Activated CD4-positive, alpha-beta T cell treated with anti-CD3 and anti-CD28 coated beads for 36 hours (primary cell): ENCODE measurements at regions of chr17 and their contacts with region 1.

Region 1: GRCh38 chr17:27879987-27880608 is 13.1 kb downstream of the LYRM9 start:
- DNase-seq: peak; percentile 85
- ATAC-seq: peak; percentile 91
- H3K4me3 Mint-ChIP-seq: no peak overlapping the region
- H3K27ac Mint-ChIP-seq: no peak overlapping the region
- H3K4me1 Mint-ChIP-seq: peaks cover 17% of the 10 kb centered on the region
- H3K27me3 Mint-ChIP-seq: no peaks in the 10 kb centered on the region

Region 2: DNA sequence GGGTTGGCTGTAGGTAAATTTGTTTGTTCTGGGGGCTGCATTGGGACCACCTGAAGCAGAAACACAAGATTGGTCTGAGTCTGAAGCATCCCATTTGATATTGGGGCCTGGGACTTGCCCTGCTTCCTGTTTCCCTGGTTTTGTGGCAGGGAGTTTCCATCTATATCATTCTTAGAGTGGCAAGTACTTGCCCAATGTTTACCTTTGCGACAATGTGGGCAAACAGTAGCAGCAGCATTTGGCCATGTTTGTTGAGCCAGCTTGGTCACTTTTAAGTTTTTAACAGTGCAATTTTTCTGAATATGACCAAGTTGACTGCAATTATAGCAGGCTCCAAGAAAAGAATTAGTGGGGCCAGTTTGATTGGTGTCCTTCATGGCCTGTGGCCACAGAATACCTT is 187.3 kb before region 1 on chr17:
- CTCF ChIA-PET with region 1: no interaction called
- POLR2A ChIA-PET with region 1: no interaction called
- intact Hi-C with region 1: no loop called
- DNase-seq: no peak
- ATAC-seq: no peak
- H3K4me3 Mint-ChIP-seq: no peak overlapping the region
- H3K27ac Mint-ChIP-seq: no peak overlapping the region
- H3K4me1 Mint-ChIP-seq: no peaks in the 10 kb centered on the region
- H3K27me3 Mint-ChIP-seq: peaks cover 6% of the 10 kb centered on the region

Region 3: DNA sequence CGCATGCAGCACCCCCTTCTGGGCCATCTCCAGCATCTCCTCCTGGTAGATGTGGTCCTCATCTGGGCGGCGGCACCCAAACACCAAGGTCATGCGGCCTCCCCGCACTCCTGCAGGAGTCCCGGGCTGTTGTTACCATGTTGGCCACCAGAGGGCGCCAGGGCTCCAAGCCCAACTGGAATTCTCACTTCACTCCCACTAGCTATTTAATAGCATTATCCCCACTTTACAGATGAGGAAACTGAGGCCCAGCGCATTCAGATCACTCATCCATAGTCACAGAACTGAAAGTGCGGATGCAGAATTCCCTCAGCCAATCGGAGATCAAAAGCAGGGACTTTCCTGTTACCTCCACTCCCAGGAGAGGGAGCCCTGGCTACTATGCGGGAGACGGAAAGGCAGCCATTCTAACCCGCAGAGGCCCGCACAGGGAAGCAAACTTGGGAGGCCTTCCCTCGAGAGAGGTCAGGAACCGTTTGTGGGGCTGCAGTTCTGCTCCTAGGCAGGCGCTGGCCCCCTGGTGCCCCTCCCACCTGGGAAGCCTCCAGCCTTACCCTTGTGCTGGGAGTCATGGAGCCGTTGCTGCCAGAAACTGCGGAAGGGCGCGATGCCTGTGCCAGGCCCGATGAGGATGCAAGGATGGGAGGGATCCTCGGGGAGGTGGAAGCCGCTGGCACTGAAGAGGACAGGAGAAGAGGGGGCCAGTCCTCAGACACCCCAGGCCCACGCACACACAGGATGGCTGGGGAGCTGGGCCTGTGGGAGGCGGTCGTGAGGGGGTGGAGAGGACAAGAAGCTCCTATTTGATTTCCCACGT is 119.8 kb before region 1 on chr17:
- CTCF ChIA-PET with region 1: interaction called, 76 read pairs
- POLR2A ChIA-PET with region 1: interaction called, 3 read pairs
- intact Hi-C with region 1: loop called (anchors 1 kb)
- DNase-seq: peak; percentile 86
- ATAC-seq: peak; percentile 64
- H3K4me3 Mint-ChIP-seq: no peak overlapping the region
- H3K27ac Mint-ChIP-seq: no peak overlapping the region
- H3K4me1 Mint-ChIP-seq: no peaks in the 10 kb centered on the region
- H3K27me3 Mint-ChIP-seq: peaks cover 3% of the 10 kb centered on the region

Region 4: DNA sequence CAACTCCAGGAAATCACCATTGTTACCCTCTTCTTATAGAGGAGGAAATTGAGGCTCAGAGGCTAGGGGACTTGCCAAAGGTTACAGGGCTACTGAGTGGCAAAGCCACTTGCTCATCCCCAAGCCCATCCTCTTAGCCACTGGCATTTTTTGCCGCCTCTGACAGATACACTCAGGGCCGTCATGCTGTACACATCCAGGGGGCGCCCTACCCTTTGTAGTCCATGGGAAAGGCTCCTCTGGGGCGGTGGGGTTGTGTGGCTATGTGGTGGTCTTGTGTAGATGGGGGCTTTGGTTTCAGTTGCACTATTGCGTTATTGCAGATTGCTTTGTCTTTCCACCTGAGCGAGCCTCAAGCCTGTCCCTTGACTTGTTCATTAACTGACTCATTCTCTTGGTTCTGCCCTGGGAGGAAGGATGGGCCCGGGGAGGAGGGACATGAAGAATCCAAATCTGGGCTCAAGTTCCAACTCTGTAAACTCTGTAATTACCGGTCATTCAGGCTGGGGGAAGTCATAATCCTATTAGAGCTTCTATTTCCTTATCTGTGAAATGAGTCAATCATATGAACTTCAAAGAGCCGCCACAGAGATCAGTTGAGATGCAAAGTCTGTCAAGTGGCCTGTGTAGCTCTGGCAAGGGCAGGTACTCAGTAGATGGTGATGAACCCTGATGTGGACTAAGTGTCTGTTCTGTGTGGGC is 82.6 kb before region 1 on chr17:
- CTCF ChIA-PET with region 1: interaction called, 16 read pairs
- POLR2A ChIA-PET with region 1: no interaction called
- intact Hi-C with region 1: no loop called
- DNase-seq: no peak
- ATAC-seq: no peak
- H3K4me3 Mint-ChIP-seq: no peak overlapping the region
- H3K27ac Mint-ChIP-seq: no peak overlapping the region
- H3K4me1 Mint-ChIP-seq: peaks cover 4% of the 10 kb centered on the region
- H3K27me3 Mint-ChIP-seq: peaks cover 27% of the 10 kb centered on the region

Region 5: GRCh38 chr17:27846042-27846655 is 33.9 kb before region 1 on chr17:
- CTCF ChIA-PET with region 1: interaction called, 11 read pairs
- POLR2A ChIA-PET with region 1: no interaction called
- intact Hi-C with region 1: no loop called
- DNase-seq: peak; percentile 38
- ATAC-seq: peak; percentile 57
- H3K4me3 Mint-ChIP-seq: peak overlapping the region; percentile 30
- H3K27ac Mint-ChIP-seq: peak overlapping the region; percentile 84
- H3K4me1 Mint-ChIP-seq: peaks cover 16% of the 10 kb centered on the region
- H3K27me3 Mint-ChIP-seq: no peaks in the 10 kb centered on the region

Region 6: DNA sequence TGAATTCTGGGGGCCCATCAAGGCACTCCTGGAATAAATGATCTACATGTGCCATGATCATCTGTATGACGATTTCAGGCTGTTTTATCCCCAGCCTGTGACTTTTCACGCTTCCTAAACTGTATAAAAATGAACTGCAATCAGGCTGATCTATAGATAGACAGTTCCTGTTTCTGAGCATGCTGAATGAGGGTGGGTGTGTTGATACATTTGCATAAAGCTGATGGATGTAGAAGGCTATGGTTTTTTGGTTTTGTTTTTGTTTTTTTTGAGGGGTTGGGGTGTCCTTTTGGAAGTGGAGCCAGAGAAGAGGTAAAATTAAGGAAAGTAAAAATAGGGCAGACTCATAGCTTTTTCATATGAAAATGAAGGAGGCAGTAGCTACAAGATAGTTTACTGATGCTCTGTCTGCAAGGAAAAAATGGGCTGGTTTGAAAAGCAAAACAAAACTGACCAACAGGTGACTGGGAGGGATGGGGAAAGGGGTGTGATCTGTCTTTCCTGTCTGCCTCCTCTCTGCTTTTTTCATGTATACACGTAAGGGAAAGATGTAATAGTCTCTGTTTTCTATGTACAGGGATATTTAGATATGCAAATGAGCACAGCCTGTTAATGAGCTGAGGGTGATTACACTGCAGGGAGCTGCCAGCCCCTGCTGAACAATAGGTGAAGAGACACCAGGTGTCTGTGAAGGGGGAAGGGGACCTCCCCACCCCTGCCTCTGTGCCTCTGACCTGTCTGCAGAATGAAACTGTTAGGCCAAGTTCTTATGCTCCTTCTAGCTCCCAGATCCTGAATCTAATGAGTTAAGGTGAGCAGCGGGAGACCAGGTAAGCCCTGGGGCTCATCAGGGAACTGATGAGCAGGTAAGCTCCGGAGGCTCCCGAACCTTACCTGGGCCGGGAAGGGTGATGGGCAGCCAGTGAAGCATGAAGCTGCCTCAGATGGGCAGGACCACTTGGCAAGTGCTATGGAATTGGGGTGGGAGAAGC is 59.7 kb after region 1 on chr17:
- CTCF ChIA-PET with region 1: no interaction called
- POLR2A ChIA-PET with region 1: no interaction called
- intact Hi-C with region 1: no loop called
- DNase-seq: no peak
- ATAC-seq: no peak
- H3K4me3 Mint-ChIP-seq: no peak overlapping the region
- H3K27ac Mint-ChIP-seq: no peak overlapping the region
- H3K4me1 Mint-ChIP-seq: no peaks in the 10 kb centered on the region
- H3K27me3 Mint-ChIP-seq: peaks cover 13% of the 10 kb centered on the region